ENCODE measurements at regions of chr2 and their contacts with region 1.

Region 1: GRCh38 chr2:42673989-42674579 is 89.9 kb downstream of the OXER1 start:
- DNase-seq: no peak
- ATAC-seq: no peak
- H3K4me3 ChIP-seq: no peak overlapping the region
- H3K27ac ChIP-seq: no peak overlapping the region
- H3K4me1 ChIP-seq: no peaks in the 10 kb centered on the region
- H3K27me3 ChIP-seq: no peaks in the 10 kb centered on the region
- CTCF ChIP-seq: no peak
- POLR2A ChIP-seq: no peak

Region 2: GRCh38 chr2:42754021-42754775 is 80.1 kb after region 1 on chr2:
- intact Hi-C with region 1: loop called in 1 of 10 experiments (anchors 10 kb)
- DNase-seq: peak in 1 of 5 donors; percentile 52
- ATAC-seq: peak; percentile 60 to 85 (median 68)
- H3K4me3 ChIP-seq: no peak overlapping the region
- H3K27ac ChIP-seq: peak overlapping the region in 2 of 12 donors; percentile 22 to 80
- H3K4me1 ChIP-seq: peaks cover 0 to 50% (median 16%) of the 10 kb centered on the region in 12 donors
- H3K27me3 ChIP-seq: no peaks in the 10 kb centered on the region
- CTCF ChIP-seq: no peak
- POLR2A ChIP-seq: no peak

Measured in heart left ventricle (tissue), 16 donors.